CD8-positive, alpha-beta T cell (primary cell): ENCODE measurements at regions of chr12 and their contacts with region 1.

Region 1: DNA sequence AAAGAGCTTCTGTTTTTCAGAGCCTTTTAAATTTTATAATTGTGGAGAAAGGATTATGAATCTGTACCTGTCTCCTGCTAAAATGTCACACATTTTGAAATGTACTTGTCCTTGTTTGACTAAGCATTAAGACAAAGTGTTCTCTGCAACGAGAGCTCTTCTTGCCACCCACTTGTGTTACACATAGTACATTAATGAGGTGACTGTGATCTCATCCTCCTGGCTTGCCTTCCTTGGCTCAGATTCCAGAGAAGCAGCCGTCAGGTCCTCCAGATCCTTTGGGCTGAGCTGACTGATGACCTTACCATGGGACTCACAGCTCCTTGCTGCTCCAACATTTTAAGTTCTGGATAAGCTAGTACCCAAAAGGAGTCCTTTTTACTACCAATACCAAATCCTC is 81.4 kb downstream of the BBS10 start:
- DNase-seq: no peak
- ATAC-seq: no peak
- H3K4me3 ChIP-seq: no peak overlapping the region
- H3K4me3 Mint-ChIP-seq: no peak overlapping the region
- H3K27ac ChIP-seq: no peak overlapping the region
- H3K27ac Mint-ChIP-seq: no peak overlapping the region
- H3K4me1 ChIP-seq: no peaks in the 10 kb centered on the region
- H3K4me1 Mint-ChIP-seq: no peaks in the 10 kb centered on the region
- H3K27me3 ChIP-seq: no peaks in the 10 kb centered on the region
- H3K27me3 Mint-ChIP-seq: peaks cover 14% of the 10 kb centered on the region
- CTCF ChIP-seq: no peak

Region 2: GRCh38 chr12:75526655-75527511 is 739.9 kb before region 1 on chr12:
- CTCF ChIA-PET with region 1: no interaction called
- POLR2A ChIA-PET with region 1: no interaction called
- intact Hi-C with region 1: loop called in 1 of 2 experiments (anchors 10 kb)
- DNase-seq: peak in 2 of 9 experiments; percentile 45 to 60
- ATAC-seq: no peak
- H3K4me3 ChIP-seq: no peak overlapping the region
- H3K4me3 Mint-ChIP-seq: no peak overlapping the region
- H3K27ac ChIP-seq: no peak overlapping the region
- H3K27ac Mint-ChIP-seq: no peak overlapping the region
- H3K4me1 ChIP-seq: no peaks in the 10 kb centered on the region
- H3K4me1 Mint-ChIP-seq: peaks cover 1% of the 10 kb centered on the region
- H3K27me3 ChIP-seq: peaks cover 0 to 4% of the 10 kb centered on the region in 2 experiments
- H3K27me3 Mint-ChIP-seq: peaks cover 17% of the 10 kb centered on the region
- CTCF ChIP-seq: peak; percentile 60

Region 3: GRCh38 chr12:76810671-76811419 is 544.0 kb after region 1 on chr12:
- CTCF ChIA-PET with region 1: no interaction called
- POLR2A ChIA-PET with region 1: no interaction called
- intact Hi-C with region 1: no loop called
- DNase-seq: no peak
- ATAC-seq: no peak
- H3K4me3 ChIP-seq: no peak overlapping the region
- H3K4me3 Mint-ChIP-seq: no peak overlapping the region
- H3K27ac ChIP-seq: no peak overlapping the region
- H3K27ac Mint-ChIP-seq: no peak overlapping the region
- H3K4me1 ChIP-seq: no peaks in the 10 kb centered on the region
- H3K4me1 Mint-ChIP-seq: no peaks in the 10 kb centered on the region
- H3K27me3 ChIP-seq: no peaks in the 10 kb centered on the region
- H3K27me3 Mint-ChIP-seq: no peaks in the 10 kb centered on the region
- CTCF ChIP-seq: no peak